K562 (cell line): ENCODE measurements at regions of chr5 and their contacts with region 1.

Region 1: DNA sequence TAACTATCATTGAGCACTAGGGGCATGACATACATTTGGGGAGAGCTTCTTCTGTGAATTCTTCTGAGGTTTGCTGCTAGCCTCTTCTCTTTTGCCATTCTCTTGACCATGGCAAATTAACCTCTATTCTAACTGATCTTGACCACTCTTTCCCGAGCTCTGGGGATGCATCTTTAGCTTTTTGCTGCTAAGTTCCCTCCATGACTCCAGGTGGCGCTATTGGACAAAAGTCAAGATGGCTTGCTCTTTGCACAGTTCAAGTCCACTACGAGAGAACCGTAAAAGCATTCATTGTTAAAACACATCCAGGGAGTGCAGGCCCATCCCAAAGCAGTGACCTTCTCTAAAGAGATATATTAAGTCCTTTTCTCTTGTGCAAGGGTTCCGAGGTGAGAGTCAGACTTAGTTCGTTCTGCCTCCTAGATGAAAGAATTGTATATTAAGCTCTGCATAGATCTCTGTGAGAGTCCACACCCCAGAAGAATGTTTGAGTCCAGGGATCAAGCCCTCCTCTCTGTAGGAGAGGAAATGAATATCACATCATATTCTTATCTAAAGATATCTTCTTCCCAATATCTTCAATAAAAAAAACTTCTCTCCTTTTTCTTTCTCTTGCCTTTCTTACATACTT is 1152.9 kb upstream of the CDH6 start:
- DNase-seq: peak; percentile 30 to 73 (median 37)
- ATAC-seq: peak; percentile 90
- H3K4me3 ChIP-seq: no peak overlapping the region
- H3K27ac ChIP-seq: no peak overlapping the region
- H3K4me1 ChIP-seq: no peaks in the 10 kb centered on the region
- H3K27me3 ChIP-seq: no peaks in the 10 kb centered on the region
- CTCF ChIP-seq: peak; percentile 62 to 76 (median 74)
- EP300 ChIP-seq: no peak
- POLR2A ChIP-seq: no peak
- RAD21 ChIP-seq: peak; percentile 58 to 82

Region 2: GRCh38 chr5:29902859-29903258 is 137.7 kb before region 1 on chr5:
- CTCF ChIA-PET with region 1: no interaction called
- POLR2A ChIA-PET with region 1: no interaction called
- in situ Hi-C with region 1: no loop called
- intact Hi-C with region 1: no loop called
- DNase-seq: no peak
- ATAC-seq: no peak
- H3K4me3 ChIP-seq: no peak overlapping the region
- H3K27ac ChIP-seq: no peak overlapping the region
- H3K4me1 ChIP-seq: no peaks in the 10 kb centered on the region
- H3K27me3 ChIP-seq: no peaks in the 10 kb centered on the region
- CTCF ChIP-seq: no peak
- EP300 ChIP-seq: no peak
- POLR2A ChIP-seq: no peak
- RAD21 ChIP-seq: no peak

Region 3: GRCh38 chr5:29993286-29993685 is 47.3 kb before region 1 on chr5:
- CTCF ChIA-PET with region 1: no interaction called
- POLR2A ChIA-PET with region 1: no interaction called
- in situ Hi-C with region 1: no loop called
- intact Hi-C with region 1: no loop called
- DNase-seq: peak in 2 of 4 experiments; percentile 32 to 63
- ATAC-seq: peak; percentile 87
- H3K4me3 ChIP-seq: no peak overlapping the region
- H3K27ac ChIP-seq: peak overlapping the region; percentile 20; the same call in 2 of the 3 replicates
- H3K4me1 ChIP-seq: no peaks in the 10 kb centered on the region
- H3K27me3 ChIP-seq: no peaks in the 10 kb centered on the region
- CTCF ChIP-seq: no peak
- EP300 ChIP-seq: peak; percentile 89
- POLR2A ChIP-seq: no peak
- RAD21 ChIP-seq: no peak

Region 4: DNA sequence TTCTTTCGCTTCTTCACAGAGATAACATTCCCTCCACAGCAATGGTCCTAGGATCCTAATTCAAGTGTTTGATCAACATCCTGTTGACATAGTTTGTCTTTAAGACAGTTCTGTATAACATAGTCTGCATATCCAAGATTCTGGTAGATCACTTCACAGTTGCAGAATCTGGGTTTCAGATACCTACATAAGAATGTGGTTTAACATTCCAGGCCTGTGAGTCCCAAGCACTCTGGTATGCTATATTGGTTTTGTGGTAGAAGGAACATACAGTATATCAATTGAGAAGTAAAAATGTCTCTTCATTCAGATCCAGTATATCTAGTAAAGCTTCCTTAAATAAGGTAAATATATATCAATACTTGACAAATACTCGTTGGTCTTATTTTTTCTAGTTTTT is 238.6 kb after region 1 on chr5:
- CTCF ChIA-PET with region 1: no interaction called
- POLR2A ChIA-PET with region 1: no interaction called
- in situ Hi-C with region 1: no loop called
- intact Hi-C with region 1: no loop called
- DNase-seq: no peak
- ATAC-seq: no peak
- H3K4me3 ChIP-seq: no peak overlapping the region
- H3K27ac ChIP-seq: no peak overlapping the region
- H3K4me1 ChIP-seq: no peaks in the 10 kb centered on the region
- H3K27me3 ChIP-seq: no peaks in the 10 kb centered on the region
- CTCF ChIP-seq: no peak
- EP300 ChIP-seq: no peak
- POLR2A ChIP-seq: no peak
- RAD21 ChIP-seq: no peak

Region 5: GRCh38 chr5:31186672-31187267 is 1146.2 kb after region 1 on chr5:
- CTCF ChIA-PET with region 1: no interaction called
- POLR2A ChIA-PET with region 1: no interaction called
- in situ Hi-C with region 1: no loop called
- intact Hi-C with region 1: loop called (anchors 5 kb)
- DNase-seq: peak; percentile 35 to 49 (median 46)
- ATAC-seq: peak; percentile 70; the same call in 2 of the 3 replicates
- H3K4me3 ChIP-seq: no peak overlapping the region
- H3K27ac ChIP-seq: no peak overlapping the region
- H3K4me1 ChIP-seq: no peaks in the 10 kb centered on the region
- H3K27me3 ChIP-seq: no peaks in the 10 kb centered on the region
- CTCF ChIP-seq: peak; percentile 36 to 71 (median 66); a peak in 5 of 6 replicates
- EP300 ChIP-seq: no peak
- POLR2A ChIP-seq: no peak
- RAD21 ChIP-seq: peak in 1 of 2 experiments; percentile 62; a peak in 3 of 4 replicates

Region 6: GRCh38 chr5:31232273-31232888 is 1191.8 kb after region 1 on chr5:
- CTCF ChIA-PET with region 1: no interaction called
- POLR2A ChIA-PET with region 1: no interaction called
- in situ Hi-C with region 1: no loop called
- intact Hi-C with region 1: loop called (anchors 1 kb)
- DNase-seq: peak; percentile 39 to 64 (median 58)
- ATAC-seq: peak; percentile 96
- H3K4me3 ChIP-seq: no peak overlapping the region
- H3K27ac ChIP-seq: no peak overlapping the region
- H3K4me1 ChIP-seq: no peaks in the 10 kb centered on the region
- H3K27me3 ChIP-seq: no peaks in the 10 kb centered on the region
- CTCF ChIP-seq: peak; percentile 60 to 78 (median 74)
- EP300 ChIP-seq: no peak
- POLR2A ChIP-seq: no peak
- RAD21 ChIP-seq: peak; percentile 64 to 80